HEK293 (cell line): ENCODE measurements at regions of chr6 and their contacts with region 1.

Region 1: GRCh38 chr6:3977875-3978711 is 100.8 kb downstream of the FAM217A start:
- H3K4me3 ChIP-seq: no peak overlapping the region
- H3K27ac ChIP-seq: no peak overlapping the region
- H3K4me1 ChIP-seq: no peaks in the 10 kb centered on the region
- CTCF ChIP-seq: peak; percentile 89

Region 2: DNA sequence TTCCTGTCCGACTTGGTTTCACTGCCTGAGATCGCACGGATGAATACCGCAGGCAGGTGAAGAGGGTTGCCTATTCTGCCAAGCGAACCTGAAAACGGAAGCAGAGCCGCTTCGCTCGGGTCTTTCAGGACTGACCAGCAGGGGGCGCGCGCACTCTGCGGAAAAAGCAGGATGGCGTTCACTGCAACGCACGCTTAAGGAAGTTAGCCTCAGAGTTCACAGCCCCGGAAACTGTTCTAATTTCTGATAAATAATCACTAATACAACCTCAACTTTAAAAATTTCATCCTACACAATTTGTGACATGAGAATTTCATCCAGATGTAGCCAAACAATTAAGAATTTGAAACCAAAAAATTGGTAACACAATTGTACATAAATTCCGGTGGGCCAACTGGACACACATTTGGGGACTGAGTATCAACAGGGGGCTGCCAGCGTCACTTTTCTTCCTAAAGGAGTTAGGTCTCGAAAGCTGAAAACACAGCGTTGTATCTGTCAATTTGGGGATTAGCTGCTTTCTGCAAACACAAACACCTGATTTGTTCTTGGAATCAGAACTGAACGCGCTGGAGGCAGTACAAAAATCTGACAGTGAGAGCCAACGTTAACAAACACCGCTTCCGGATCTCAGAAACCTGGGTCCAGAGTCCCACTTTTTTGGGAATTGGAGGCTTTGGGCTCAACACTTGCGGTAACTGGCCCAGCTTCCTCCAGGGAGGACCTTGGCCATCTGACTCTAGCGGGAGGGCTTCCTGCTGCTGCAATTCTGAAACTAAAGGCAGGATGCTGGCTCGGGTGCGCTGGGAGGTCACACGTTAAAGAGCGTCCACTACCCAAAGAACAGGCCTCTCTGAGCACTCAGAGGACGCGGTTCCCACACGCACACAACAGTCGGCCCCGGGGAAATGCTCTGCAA is 235.4 kb before region 1 on chr6:
- CTCF ChIA-PET with region 1: interaction called, 107 read pairs
- POLR2A ChIA-PET with region 1: interaction called, 4 read pairs
- H3K4me3 ChIP-seq: no peak overlapping the region
- H3K27ac ChIP-seq: no peak overlapping the region
- H3K4me1 ChIP-seq: peaks cover 6% of the 10 kb centered on the region; the same call in 1 of the 2 replicates
- CTCF ChIP-seq: peak; percentile 79

Region 3: DNA sequence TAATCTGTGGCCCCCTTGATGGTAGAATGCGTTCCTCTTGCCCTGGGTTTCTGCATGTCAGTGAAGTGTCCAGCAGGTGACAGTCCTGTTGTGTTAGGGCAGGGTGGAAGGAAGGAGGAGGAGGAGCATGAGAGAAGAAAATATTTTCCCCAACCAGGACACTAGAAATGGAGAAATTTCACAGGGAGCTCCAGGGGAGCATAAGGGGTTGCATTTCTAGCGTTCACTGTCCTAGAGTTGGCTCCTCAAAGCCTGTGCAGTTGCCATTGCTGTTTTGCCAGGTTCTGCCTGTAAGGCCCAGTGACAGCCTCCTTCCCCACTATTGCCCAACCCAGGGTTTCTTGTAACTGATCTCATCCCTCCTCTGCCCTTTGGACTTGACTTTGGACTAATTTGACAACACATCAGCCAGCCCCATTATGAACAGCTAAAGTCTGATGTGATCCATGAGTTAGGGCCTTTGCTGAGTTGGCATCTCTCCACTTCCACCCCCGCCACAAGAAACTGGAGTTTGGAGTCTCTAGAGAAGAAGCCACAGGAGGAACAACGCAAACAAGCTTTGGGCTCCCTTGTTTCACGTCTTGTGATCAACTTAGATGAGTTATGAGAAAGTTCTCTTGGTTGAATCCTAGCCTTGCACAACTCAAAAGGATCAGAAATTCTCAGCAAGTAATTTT is 142.9 kb before region 1 on chr6:
- CTCF ChIA-PET with region 1: interaction called, 24 read pairs
- POLR2A ChIA-PET with region 1: no interaction called
- H3K4me3 ChIP-seq: no peak overlapping the region
- H3K27ac ChIP-seq: no peak overlapping the region
- H3K4me1 ChIP-seq: no peaks in the 10 kb centered on the region
- CTCF ChIP-seq: peak; percentile 40; the same call in 1 of the 2 replicates

Region 4: DNA sequence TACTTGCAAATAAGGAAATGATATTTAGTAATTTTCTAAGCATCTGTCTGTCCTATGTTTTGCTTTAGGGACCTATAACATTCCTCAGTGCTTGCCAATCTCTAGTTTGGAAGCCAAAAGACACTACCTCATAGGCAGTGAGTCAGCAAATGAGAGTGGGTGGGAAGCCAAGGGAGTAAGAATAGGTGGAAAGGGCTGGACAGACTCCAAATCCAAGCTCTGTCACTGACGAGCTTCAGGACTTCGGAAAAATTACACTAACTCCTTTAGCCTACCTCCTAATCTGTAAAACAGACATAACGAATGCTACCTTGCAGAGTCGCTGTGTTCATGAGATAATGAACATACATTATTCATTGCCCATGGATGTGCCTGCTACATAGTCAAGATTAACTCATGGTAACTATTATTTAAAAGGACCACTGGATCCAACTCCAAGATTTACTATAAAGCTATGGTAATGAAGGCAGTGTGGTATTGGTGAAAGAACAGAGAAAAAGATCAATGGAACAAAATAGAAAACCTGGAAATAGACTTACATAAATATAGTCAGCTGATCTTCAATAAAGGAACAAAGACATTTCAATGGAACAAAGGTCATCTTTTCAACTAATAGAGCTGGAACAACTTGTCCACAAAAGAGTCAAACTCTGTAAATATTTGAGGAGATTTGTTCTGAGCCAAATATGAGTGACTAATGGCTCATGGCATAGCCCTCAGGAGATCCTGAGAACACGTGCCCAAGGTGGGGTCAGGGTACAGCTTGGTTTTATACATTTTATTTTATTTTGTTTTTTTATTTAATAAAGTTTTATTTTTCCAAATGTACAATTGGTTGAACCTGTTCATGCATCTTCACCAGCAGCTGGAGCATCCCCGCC is 64.8 kb before region 1 on chr6:
- CTCF ChIA-PET with region 1: interaction called, 16 read pairs
- POLR2A ChIA-PET with region 1: no interaction called
- H3K4me3 ChIP-seq: no peak overlapping the region
- H3K27ac ChIP-seq: peak overlapping the region; percentile 44
- H3K4me1 ChIP-seq: peaks cover 31% of the 10 kb centered on the region
- CTCF ChIP-seq: no peak

Region 5: GRCh38 chr6:3948866-3949265 is 29.2 kb before region 1 on chr6:
- CTCF ChIA-PET with region 1: interaction called, 19 read pairs
- POLR2A ChIA-PET with region 1: no interaction called
- H3K4me3 ChIP-seq: no peak overlapping the region
- H3K27ac ChIP-seq: no peak overlapping the region
- H3K4me1 ChIP-seq: no peaks in the 10 kb centered on the region
- CTCF ChIP-seq: no peak

Region 6: DNA sequence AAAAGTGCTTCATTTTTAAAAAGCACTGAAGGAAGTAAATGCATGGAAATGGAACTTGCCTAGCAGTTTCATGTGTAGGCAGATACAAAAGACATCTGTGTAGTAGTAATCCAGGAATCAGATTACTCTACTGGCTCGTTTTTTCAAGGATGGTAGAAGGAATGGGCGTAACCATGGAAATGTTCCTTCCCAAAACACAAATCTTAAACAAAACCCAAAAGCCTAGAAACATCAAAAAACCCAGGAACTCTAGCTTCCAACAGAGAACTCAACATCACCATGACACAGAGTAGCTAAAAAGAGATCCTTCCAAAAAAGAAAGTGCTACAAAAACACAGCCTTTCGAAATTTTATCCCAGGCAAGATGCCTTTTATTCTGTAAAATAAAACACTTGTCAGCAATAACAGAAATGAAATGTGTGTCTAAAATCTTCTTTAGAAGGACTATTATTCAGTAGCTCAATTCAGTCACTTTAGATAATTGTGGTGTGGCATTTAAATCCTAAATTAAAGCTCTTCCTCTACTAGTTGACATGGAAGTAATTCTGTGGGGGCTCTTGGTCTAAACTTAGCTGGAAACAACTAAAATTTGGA is 19.2 kb after region 1 on chr6:
- CTCF ChIA-PET with region 1: interaction called, 30 read pairs
- POLR2A ChIA-PET with region 1: no interaction called
- H3K4me3 ChIP-seq: no peak overlapping the region
- H3K27ac ChIP-seq: no peak overlapping the region
- H3K4me1 ChIP-seq: peaks cover 11% of the 10 kb centered on the region
- CTCF ChIP-seq: no peak